Kidney (tissue), 22 donors: ENCODE measurements at regions of chr3 and their contacts with region 1.

Region 1: DNA sequence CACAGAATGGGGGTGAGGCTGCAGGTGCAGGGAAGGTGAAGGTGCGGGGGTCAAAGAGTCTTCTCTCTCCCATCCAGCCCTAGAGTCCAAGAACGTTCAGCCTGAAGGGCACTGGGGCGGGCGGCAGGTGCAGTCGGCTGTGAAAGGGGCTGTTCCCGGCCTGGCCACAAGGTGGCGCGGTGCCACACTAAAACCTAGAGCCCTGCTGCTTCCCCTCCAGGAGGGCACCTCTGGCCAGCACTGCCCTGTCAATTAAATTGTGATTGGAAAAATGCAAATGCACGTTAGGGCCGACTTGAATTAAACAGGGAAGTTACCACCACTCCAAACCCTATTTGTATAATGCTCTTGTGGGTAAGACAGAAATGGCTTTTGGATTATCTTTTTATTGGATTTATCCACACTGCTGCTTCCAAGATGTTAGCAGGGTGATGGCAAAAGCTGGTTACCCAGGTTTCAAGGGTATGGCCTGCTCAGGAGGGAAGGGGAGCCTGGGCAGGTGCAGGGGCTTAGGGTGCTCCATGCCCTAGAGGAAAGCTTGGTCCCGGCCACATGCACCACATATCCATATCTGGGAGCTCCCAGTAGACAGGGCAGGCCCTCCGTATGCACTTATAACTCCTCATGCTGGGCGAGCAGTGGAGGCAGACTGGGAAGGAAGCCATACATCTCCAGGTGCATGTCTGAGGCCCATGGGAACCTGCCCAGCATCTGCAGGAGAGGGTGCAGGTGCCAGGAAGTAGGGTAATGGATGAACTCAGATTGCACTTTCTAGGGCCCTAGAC is 119.8 kb downstream of the ADCY5 start:
- DNase-seq: peak; percentile 79 to 88 (median 83)
- H3K4me3 ChIP-seq: no peak overlapping the region
- H3K27ac ChIP-seq: no peak overlapping the region
- H3K4me1 ChIP-seq: peaks cover 0 to 7% (median 5%) of the 10 kb centered on the region in 3 donors
- H3K27me3 ChIP-seq: no peaks in the 10 kb centered on the region
- CTCF ChIP-seq: peak; percentile 96

Region 2: GRCh38 chr3:123489400-123490004 is 160.5 kb after region 1 on chr3:
- intact Hi-C with region 1: loop called (anchors 5 kb)
- DNase-seq: peak; percentile 76 to 88 (median 80)
- H3K4me3 ChIP-seq: no peak overlapping the region
- H3K27ac ChIP-seq: no peak overlapping the region
- H3K4me1 ChIP-seq: peaks cover 0 to 2% (median 0%) of the 10 kb centered on the region in 3 donors
- H3K27me3 ChIP-seq: no peaks in the 10 kb centered on the region
- CTCF ChIP-seq: peak; percentile 95

Region 3: DNA sequence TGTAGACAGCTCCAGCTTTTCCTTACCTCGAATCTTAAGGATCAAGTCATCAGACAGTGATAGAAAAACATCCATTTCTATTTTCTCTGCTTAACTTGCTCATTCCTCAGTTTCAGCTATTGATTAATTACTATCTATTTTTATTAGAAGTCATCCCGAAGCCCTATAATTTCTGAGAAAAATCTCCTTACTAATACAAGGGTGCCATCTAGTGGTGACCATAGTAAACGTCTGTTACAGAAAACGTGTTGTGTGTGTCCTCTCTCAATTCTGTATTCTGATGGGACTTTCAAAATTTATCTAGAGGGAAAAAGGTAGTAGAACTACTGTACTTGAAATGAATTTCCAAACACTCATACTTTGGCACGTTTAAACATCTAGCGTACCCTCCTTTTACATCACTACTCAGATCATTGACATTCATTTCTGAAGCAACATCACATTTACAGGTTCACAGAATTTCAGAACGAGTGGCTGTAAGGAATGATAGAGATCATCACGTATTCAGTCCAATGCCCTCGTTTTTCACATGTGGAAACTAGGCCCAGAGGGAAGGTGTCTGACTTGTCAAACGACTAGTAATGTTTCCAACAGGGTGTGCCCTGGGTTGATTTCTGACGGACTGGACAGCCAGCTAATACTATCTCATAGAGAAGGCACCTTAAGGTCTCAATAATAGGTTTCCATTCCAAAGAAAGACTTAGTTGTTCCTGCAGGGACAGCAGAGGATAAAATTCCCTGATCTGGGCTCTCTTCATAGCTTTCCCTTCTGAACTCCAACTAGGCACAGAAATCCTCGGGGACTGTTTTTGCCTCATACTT is 230.2 kb after region 1 on chr3:
- intact Hi-C with region 1: loop called (anchors 10 kb)
- DNase-seq: peak in 2 of 5 donors; percentile 53 to 64
- H3K4me3 ChIP-seq: no peak overlapping the region
- H3K27ac ChIP-seq: no peak overlapping the region
- H3K4me1 ChIP-seq: no peaks in the 10 kb centered on the region
- H3K27me3 ChIP-seq: no peaks in the 10 kb centered on the region
- CTCF ChIP-seq: peak; percentile 80